ENCODE measurements at regions of chr5 and their contacts with region 1.

Region 1: DNA sequence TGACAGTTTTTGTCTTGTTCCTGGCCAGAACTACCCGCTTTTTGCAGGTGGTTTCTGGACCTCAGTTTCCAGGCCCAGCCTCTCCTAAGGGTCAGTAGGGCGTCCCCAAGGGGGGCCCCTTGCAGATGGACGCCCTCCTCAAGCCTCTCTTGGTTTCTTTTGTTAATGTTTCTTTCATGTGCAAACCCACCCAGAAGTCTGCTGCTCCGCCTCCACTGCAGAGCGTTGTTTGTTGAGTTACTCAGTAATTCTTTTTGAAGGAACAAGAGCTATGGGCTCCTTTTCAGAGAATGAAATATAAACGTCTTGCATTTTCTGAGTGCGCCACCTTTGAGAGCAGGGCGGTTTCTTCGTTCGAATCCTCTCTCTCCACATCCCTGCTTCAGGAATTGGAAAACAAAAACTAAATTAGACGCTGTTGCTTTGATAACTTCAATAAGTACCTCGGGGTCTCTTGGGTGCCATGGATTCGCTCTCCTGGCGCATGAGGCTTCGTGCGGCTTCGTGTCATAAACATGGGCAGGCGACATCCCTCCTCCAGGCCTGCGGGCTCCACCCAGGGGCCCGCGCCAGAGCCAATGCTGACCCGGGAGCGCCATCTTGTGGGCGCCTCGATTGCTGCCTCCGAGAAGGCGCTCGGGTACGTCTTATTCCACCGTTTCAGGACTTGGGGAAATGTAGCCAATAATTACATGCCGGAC is 38.3 kb upstream of the CKMT2 start:
- DNase-seq: peak; percentile 85
- H3K4me3 ChIP-seq: no peak overlapping the region
- H3K27ac ChIP-seq: no peak overlapping the region
- H3K4me1 ChIP-seq: peaks cover 0 to 10% (median 7%) of the 10 kb centered on the region in 4 donors
- H3K27me3 ChIP-seq: no peaks in the 10 kb centered on the region
- CTCF ChIP-seq: peak; percentile 49 to 84 (median 58)
- EP300 ChIP-seq: no peak
- POLR2A ChIP-seq: no peak

Region 2: GRCh38 chr5:80686757-80687156 is 508.0 kb before region 1 on chr5:
- intact Hi-C with region 1: loop called (anchors 10 kb)
- DNase-seq: no peak
- H3K4me3 ChIP-seq: no peak overlapping the region
- H3K27ac ChIP-seq: no peak overlapping the region
- H3K4me1 ChIP-seq: no peaks in the 10 kb centered on the region
- H3K27me3 ChIP-seq: no peaks in the 10 kb centered on the region
- CTCF ChIP-seq: no peak
- EP300 ChIP-seq: no peak
- POLR2A ChIP-seq: no peak